HCT116 (cell line): ENCODE measurements at regions of chr2 and their contacts with region 1.

Region 1: GRCh38 chr2:158034199-158034866 is 67.3 kb upstream of the UPP2 start:
- DNase-seq: peak; percentile 53
- ATAC-seq: peak; percentile 97
- H3K4me3 ChIP-seq: no peak overlapping the region
- H3K27ac ChIP-seq: no peak overlapping the region
- H3K4me1 ChIP-seq: no peaks in the 10 kb centered on the region
- H3K27me3 ChIP-seq: no peaks in the 10 kb centered on the region
- CTCF ChIP-seq: peak; percentile 59 to 70 (median 60)
- POLR2A ChIP-seq: no peak
- RAD21 ChIP-seq: peak; percentile 84

Region 2: DNA sequence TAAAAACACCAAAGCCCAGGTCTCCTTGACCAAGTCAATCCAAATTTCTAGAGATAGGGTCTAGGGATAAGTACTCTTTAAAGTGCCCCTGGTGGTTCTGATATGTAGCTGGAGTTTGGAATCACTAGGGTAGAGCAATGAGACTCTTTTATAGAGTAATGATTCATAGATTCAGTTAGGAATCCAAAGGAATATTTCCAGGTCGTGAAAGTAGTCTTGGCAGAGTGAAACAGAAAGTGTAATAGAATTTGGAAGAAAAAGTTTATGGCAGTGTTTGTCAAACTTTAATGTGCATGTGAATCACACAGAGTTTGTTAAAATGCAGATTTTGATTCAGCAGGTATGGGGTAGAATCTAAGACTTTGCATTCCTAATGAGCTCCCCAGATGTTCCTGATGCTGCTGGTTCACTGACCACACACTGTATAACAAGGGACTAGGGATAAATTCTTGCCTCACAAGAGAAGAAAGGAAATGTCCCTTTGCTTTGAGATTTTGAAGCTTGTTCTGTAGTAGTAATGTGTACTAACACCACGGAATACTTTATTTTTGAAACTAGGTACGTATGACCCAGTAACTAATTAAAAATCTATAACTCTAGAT is 69.2 kb after region 1 on chr2:
- CTCF ChIA-PET with region 1: no interaction called
- POLR2A ChIA-PET with region 1: no interaction called
- RAD21 ChIA-PET with region 1: no interaction called
- intact Hi-C with region 1: no loop called
- DNase-seq: no peak
- ATAC-seq: no peak
- H3K4me3 ChIP-seq: no peak overlapping the region
- H3K27ac ChIP-seq: no peak overlapping the region
- H3K4me1 ChIP-seq: no peaks in the 10 kb centered on the region
- H3K27me3 ChIP-seq: no peaks in the 10 kb centered on the region
- CTCF ChIP-seq: no peak
- POLR2A ChIP-seq: no peak
- RAD21 ChIP-seq: no peak

Region 3: GRCh38 chr2:158456309-158457066 is 422.2 kb after region 1 on chr2 and contains the starts of genes CCDC148 and PKP4:
- CTCF ChIA-PET with region 1: no interaction called
- POLR2A ChIA-PET with region 1: no interaction called
- RAD21 ChIA-PET with region 1: no interaction called
- intact Hi-C with region 1: loop called (anchors 5 kb)
- DNase-seq: peak; percentile 86
- ATAC-seq: peak; percentile 86
- H3K4me3 ChIP-seq: peak within 1 kb of the TSS; percentile 78 to 85
- H3K27ac ChIP-seq: peak within 1 kb of the TSS; percentile 85
- H3K4me1 ChIP-seq: peaks cover 22 to 29% of the 10 kb centered on the region in 2 experiments
- H3K27me3 ChIP-seq: no peaks in the 10 kb centered on the region
- CTCF ChIP-seq: no peak
- POLR2A ChIP-seq: no peak
- RAD21 ChIP-seq: no peak
- total RNA-seq, gene CCDC148: 0.59 TPM
- total RNA-seq, gene PKP4: 55.2 TPM

Region 4: DNA sequence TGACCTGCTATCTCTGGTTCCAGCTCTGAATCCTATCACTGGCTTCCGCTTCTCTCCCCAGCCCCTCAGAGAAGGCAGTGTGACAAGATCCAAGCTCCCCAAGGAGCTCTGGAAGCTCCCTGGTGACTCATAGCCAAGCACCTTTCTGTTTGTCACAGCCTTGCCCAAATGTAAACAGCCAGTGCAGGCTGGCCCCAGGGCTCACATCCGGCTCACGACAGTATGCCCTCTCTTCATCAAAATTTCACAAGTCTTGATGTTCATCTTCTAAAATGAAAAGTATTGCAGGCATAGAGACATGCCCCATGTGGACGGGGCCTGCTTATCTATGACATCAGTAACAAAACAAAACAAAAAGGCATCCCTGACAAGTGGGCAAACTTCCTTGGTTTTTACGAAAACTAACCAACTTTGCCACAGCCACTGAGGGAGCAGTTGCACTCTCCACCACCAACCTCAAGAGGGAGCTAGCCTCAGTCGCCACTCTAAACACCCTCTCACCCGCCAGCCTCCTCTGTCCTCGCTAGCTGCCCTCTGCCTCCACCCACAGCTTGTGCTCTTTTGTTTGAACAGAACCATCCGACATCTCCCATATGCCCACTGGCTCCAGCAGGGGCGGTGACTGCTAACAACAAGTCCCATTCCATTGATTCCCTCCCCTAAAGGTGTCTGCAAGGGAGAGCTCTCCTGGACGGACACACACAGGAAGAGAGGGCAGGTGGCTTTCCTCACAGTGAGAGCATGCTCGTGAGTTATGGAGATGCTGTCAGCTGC is 689.8 kb after region 1 on chr2:
- CTCF ChIA-PET with region 1: interaction called, 10 read pairs
- POLR2A ChIA-PET with region 1: no interaction called
- RAD21 ChIA-PET with region 1: no interaction called
- intact Hi-C with region 1: no loop called
- DNase-seq: peak; percentile 35
- ATAC-seq: peak; percentile 93
- H3K4me3 ChIP-seq: peak overlapping the region in 1 of 2 experiments; percentile 34; a peak in 3 of 4 replicates
- H3K27ac ChIP-seq: no peak overlapping the region; the same call in 1 of the 2 replicates
- H3K4me1 ChIP-seq: peaks cover 10 to 20% of the 10 kb centered on the region in 2 experiments
- H3K27me3 ChIP-seq: no peaks in the 10 kb centered on the region
- CTCF ChIP-seq: peak; percentile 34 to 82 (median 77); a peak in 5 of 6 replicates
- POLR2A ChIP-seq: no peak
- RAD21 ChIP-seq: peak; percentile 34; the same call in 1 of the 2 replicates